WTC11 (cell line): ENCODE measurements at regions of chr11 and their contacts with region 1.

Region 1: DNA sequence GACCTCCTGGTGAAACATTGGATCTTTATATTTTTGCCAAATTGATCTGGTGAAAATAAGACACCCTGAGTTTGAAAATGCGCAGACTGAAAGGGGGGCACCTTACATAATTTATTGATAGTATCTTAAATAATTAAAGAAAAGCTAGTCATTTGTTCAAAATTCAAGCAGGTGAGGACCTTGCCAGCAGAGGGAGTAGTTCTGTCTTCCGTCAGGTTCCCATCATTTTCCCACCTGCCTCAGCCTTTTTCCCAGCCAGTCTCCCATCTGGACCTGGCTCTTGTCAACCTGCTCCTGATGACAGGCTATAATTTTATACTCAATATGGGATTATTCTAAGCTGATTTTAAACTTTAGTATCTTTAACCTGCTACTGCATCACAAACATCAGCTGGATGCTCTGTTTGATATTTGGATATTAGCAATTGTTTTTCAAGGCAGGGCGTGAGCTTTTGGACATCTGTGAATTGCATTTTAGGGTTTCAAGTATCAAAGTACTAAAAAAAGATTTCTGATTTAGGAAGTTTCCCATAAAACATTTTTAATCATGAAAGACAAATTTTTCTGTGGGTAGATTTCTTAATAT is 132.0 kb downstream of the ELP4 start:
- DNase-seq: peak; percentile 65
- ATAC-seq: 0 out of 2 replicates have a peak, but pooled peaks have one; percentile 38
- H3K4me3 Mint-ChIP-seq: no peak overlapping the region
- H3K27ac Mint-ChIP-seq: no peak overlapping the region
- H3K4me1 Mint-ChIP-seq: no peaks in the 10 kb centered on the region
- H3K27me3 Mint-ChIP-seq: no peaks in the 10 kb centered on the region
- CTCF ChIP-seq: peak; percentile 59

Region 2: GRCh38 chr11:31535479-31535878 is 106.1 kb before region 1 on chr11:
- CTCF ChIA-PET with region 1: no interaction called
- POLR2A ChIA-PET with region 1: no interaction called
- DNase-seq: no peak
- ATAC-seq: no peak
- H3K4me3 Mint-ChIP-seq: no peak overlapping the region
- H3K27ac Mint-ChIP-seq: no peak overlapping the region
- H3K4me1 Mint-ChIP-seq: no peaks in the 10 kb centered on the region
- H3K27me3 Mint-ChIP-seq: no peaks in the 10 kb centered on the region
- CTCF ChIP-seq: no peak

Region 3: GRCh38 chr11:31628111-31628510 is 13.5 kb before region 1 on chr11:
- CTCF ChIA-PET with region 1: interaction called, 14 read pairs
- POLR2A ChIA-PET with region 1: no interaction called
- DNase-seq: no peak
- ATAC-seq: no peak
- H3K4me3 Mint-ChIP-seq: no peak overlapping the region
- H3K27ac Mint-ChIP-seq: no peak overlapping the region
- H3K4me1 Mint-ChIP-seq: no peaks in the 10 kb centered on the region
- H3K27me3 Mint-ChIP-seq: no peaks in the 10 kb centered on the region
- CTCF ChIP-seq: no peak

Region 4: GRCh38 chr11:31655483-31655882 is 13.9 kb after region 1 on chr11:
- CTCF ChIA-PET with region 1: interaction called, 24 read pairs
- POLR2A ChIA-PET with region 1: no interaction called
- DNase-seq: no peak
- ATAC-seq: no peak
- H3K4me3 Mint-ChIP-seq: no peak overlapping the region
- H3K27ac Mint-ChIP-seq: no peak overlapping the region
- H3K4me1 Mint-ChIP-seq: peaks cover 7% of the 10 kb centered on the region
- H3K27me3 Mint-ChIP-seq: no peaks in the 10 kb centered on the region
- CTCF ChIP-seq: no peak

Region 5: DNA sequence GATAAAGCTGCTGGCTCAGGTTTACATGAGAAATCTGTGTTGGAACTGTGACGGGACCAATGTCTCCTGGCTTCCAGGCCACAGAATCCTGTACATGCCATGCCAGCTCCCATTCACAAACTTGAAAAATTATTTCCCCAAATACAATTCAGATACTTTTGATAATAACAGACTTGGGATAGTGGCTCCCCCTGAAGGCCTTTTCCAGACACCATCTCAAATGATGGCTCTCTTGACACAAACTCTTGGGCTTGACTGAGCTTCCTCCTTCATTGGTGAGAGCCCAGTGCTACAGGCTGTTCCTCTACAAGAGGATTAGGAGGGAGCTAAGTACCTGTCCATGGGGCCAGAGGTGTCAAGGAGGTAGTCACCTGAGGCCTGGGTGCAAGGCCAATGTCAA is 274.3 kb after region 1 on chr11:
- CTCF ChIA-PET with region 1: interaction called, 13 read pairs
- POLR2A ChIA-PET with region 1: no interaction called
- DNase-seq: no peak
- ATAC-seq: no peak
- H3K4me3 Mint-ChIP-seq: no peak overlapping the region
- H3K27ac Mint-ChIP-seq: no peak overlapping the region
- H3K4me1 Mint-ChIP-seq: no peaks in the 10 kb centered on the region
- H3K27me3 Mint-ChIP-seq: peaks cover 4% of the 10 kb centered on the region; the same call in 1 of the 2 replicates
- CTCF ChIP-seq: no peak